ENCODE measurements at regions of chr1 and their contacts with region 1.

Region 1: GRCh38 chr1:207797229-207797961 is 45.5 kb downstream of the CD46 start:
- H3K4me3 ChIP-seq: no peak overlapping the region
- H3K27ac ChIP-seq: no peak overlapping the region
- H3K4me1 ChIP-seq: no peaks in the 10 kb centered on the region; the same call in 1 of the 2 replicates
- CTCF ChIP-seq: peak; percentile 66

Region 2: DNA sequence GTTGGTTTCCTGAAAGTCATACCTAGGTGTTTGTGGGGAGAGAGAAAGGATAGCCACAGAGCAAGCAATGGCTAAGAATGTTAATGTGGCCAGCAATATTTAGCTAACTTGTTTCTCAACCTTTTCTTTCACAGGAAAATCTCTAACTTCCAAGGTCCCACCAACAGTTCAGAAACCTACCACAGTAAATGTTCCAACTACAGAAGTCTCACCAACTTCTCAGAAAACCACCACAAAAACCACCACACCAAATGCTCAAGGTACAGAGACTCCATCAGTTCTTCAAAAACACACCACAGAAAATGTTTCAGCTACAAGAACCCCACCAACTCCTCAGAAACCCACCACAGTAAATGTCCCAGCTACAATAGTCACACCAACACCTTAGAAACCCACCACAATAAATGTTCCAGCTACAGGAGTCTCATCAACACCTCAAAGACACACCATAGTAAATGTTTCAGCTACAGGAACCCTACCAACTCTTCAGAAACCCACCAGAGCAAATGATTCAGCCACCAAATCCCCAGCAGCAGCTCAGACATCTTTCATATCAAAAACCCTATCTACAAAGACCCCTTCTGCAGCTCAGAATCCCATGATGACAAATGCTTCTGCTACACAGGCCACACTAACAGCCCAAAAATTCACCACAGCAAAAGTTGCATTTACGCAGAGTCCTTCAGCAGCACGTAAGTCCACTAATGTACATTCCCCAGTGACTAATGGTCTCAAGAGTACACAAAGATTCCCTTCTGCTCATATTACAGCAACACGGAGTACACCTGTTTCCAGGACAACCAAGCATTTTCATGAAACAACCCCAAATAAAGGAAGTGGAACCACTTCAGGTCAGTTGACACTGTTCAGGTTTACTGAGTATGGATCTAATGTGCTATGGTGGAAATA is 460.6 kb before region 1 on chr1:
- CTCF ChIA-PET with region 1: no interaction called
- POLR2A ChIA-PET with region 1: no interaction called
- H3K4me3 ChIP-seq: no peak overlapping the region
- H3K27ac ChIP-seq: no peak overlapping the region
- H3K4me1 ChIP-seq: no peaks in the 10 kb centered on the region
- CTCF ChIP-seq: no peak

Region 3: GRCh38 chr1:207644852-207645634 is 152.4 kb before region 1 on chr1 and contains the start of gene CR1L:
- CTCF ChIA-PET with region 1: interaction called, 12 read pairs
- POLR2A ChIA-PET with region 1: no interaction called
- H3K4me3 ChIP-seq: peak within 1 kb of the TSS; percentile 56
- H3K27ac ChIP-seq: no peak within 1 kb of the TSS
- H3K4me1 ChIP-seq: no peaks in the 10 kb centered on the region
- CTCF ChIP-seq: no peak

Region 4: GRCh38 chr1:207698822-207699483 is 98.4 kb before region 1 on chr1:
- CTCF ChIA-PET with region 1: interaction called, 12 read pairs
- POLR2A ChIA-PET with region 1: no interaction called
- H3K4me3 ChIP-seq: no peak overlapping the region
- H3K27ac ChIP-seq: no peak overlapping the region
- H3K4me1 ChIP-seq: no peaks in the 10 kb centered on the region
- CTCF ChIP-seq: peak; percentile 60; the same call in 1 of the 2 replicates

Region 5: GRCh38 chr1:207711285-207711684 is 86.1 kb before region 1 on chr1:
- CTCF ChIA-PET with region 1: interaction called, 30 read pairs
- POLR2A ChIA-PET with region 1: no interaction called
- H3K4me3 ChIP-seq: no peak overlapping the region
- H3K27ac ChIP-seq: no peak overlapping the region
- H3K4me1 ChIP-seq: no peaks in the 10 kb centered on the region
- CTCF ChIP-seq: peak; percentile 23; the same call in 1 of the 2 replicates

Region 6: DNA sequence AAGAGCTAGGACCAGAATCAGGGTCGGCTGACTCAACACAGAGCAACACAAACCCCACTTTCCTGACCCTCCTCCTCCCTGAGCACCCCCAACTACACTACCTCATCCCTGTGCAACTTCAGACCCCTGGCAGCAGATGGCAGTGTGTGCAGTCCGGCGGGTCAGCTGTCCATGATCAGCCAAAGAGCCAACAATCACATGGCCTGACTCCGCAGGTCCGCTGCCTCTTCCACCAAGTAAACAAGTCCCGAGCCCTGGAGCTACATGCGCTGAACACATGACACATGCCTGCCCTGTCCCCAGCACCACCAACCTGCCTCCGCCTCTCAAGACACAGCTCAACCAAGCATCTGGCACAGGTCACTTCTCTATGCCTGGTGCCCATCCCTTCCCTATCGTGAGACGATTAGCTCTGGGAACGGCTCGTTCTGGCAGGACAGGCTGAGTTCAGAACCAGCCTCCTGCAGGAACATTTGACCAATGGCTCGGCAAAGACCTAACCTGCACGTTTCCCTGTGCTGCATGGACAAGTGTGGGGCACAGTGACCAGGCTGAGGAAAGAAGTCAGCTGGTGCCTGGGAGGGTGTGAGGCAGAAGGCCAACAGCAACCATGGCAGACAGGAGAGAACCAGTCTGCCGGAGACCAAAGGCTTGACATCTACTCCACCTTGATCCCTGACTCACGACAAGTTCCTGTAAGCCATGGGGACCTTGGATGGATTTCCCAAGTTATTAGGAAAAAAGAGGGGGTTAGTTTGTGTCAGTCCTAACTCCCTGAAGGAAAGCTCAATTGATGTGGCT is 14.7 kb after region 1 on chr1:
- CTCF ChIA-PET with region 1: interaction called, 22 read pairs
- POLR2A ChIA-PET with region 1: no interaction called
- H3K4me3 ChIP-seq: no peak overlapping the region
- H3K27ac ChIP-seq: no peak overlapping the region
- H3K4me1 ChIP-seq: no peaks in the 10 kb centered on the region
- CTCF ChIP-seq: 0 out of 2 replicates have a peak, but pooled peaks have one; percentile 14

Region 7: DNA sequence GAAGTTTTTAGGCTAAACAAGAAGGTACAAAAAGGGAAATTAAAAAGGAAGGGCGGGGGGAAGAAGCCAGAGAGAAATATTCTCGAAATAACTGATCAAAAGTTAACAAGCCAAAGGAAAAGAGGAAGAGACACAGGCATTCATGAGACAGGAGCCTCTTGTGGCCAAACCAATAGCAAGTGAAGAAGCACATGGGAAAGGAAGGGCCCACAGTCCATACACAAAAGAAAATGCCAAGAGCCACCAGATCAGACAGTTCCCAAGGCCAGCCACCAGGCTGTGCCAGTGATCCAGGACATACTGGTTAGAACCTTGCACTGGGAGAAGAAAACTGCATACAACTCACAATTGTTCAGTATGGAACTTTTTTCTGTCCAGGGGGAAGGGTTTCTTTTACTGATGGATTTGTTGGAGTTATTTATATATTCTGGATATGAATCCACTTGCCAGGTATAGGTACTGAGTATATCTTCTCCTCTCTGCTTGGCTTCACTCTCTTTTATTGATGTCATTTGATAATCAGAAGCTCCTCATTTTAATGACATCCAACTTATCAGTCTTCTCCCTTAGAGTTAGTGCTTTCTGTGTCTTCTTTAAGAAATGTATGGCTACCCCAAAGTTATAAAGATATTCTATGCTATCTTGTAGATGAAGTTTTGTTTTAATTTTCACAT is 31.2 kb after region 1 on chr1:
- CTCF ChIA-PET with region 1: interaction called, 10 read pairs
- POLR2A ChIA-PET with region 1: no interaction called
- H3K4me3 ChIP-seq: no peak overlapping the region
- H3K27ac ChIP-seq: no peak overlapping the region
- H3K4me1 ChIP-seq: no peaks in the 10 kb centered on the region
- CTCF ChIP-seq: peak; percentile 60